Activated CD4-positive, alpha-beta memory T cell treated with anti-CD3 and anti-CD28 coated beads for 36 hours (primary cell): ENCODE measurements at regions of chr1 and their contacts with region 1.

Region 1: DNA sequence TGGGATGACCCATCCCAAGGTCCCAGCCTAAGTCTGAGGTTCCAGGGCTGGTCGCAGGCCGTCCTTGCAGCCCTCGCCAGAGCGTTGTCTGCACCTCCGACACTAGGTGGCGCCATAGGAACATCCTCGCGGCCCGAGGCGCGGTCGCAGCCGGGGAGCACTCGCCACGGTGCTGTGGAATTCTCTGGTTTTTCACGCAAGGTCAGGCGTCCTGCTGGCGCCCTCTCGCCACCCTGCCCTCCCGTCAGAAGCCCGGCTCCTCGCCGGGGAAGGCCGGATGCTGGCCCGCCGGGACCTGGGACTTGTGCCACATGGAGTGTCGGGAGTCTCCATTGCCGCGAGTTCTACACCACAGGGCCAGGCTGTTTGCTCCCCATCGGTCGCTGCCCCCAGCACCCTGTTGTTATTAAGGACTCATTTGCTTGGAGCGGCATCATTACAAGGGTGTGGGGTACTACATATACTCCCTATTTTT is 196.8 kb upstream of the LMO4 start:
- DNase-seq: peak; percentile 79
- H3K4me3 Mint-ChIP-seq: peak overlapping the region; percentile 70
- H3K27ac Mint-ChIP-seq: no peak overlapping the region
- H3K4me1 Mint-ChIP-seq: peaks cover 10% of the 10 kb centered on the region
- H3K27me3 Mint-ChIP-seq: peaks cover 32% of the 10 kb centered on the region

Region 2: DNA sequence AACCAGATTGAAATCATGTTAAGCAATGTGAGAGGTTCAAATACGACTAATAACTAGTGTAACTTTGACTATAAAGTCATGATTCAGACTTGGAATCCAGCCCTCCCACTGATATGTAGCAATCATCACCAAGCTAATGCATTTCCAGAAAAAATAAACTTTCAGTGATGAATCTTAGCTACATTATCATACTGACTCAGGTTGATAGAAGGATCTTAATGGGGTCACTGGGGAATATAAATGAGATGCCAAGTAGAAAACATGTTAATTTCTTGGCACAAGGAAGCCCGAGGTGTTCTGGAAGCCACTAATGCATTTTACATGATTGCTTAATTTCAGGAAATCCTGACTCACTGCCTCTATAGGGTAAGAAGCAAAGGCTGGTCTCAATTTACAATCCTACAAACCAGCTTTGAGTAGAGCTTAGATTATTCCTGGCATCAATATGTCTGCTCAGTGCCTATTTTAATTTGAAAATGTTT is 285.6 kb before region 1 on chr1:
- CTCF ChIA-PET with region 1: no interaction called
- POLR2A ChIA-PET with region 1: no interaction called
- intact Hi-C with region 1: no loop called
- DNase-seq: no peak
- H3K4me3 Mint-ChIP-seq: no peak overlapping the region
- H3K27ac Mint-ChIP-seq: no peak overlapping the region
- H3K4me1 Mint-ChIP-seq: no peaks in the 10 kb centered on the region
- H3K27me3 Mint-ChIP-seq: no peaks in the 10 kb centered on the region

Region 3: DNA sequence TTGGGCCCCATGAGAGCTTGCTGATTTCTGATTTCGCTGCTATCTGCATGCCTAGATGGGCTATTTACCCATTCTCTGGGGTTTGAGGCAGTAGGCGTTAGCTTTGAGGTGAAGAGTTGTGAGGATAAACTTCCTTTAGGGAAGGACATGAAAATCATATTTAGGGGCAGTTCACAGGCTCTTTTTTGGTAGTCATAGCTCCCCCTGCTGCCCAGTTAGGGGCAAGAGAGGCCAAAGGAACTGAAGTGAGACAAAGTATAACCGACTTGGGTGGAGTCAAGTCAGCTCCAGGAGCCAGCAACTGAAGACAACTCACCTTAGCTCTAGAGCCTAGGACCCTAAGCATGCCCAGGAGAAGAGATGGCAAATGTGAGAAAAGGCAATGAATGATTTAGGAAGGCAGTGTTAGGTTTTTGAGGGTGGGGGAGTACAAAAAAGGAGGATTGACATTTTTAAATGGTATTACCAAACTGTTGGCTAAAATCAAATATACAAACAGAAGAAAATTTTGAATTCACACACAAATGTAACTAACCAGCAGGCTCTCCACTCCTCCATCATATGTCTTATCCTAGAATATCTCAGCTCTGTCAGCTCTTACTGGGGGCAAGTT is 822.0 kb after region 1 on chr1:
- CTCF ChIA-PET with region 1: interaction called, 3 read pairs
- POLR2A ChIA-PET with region 1: no interaction called
- intact Hi-C with region 1: loop called (anchors 2 kb)
- DNase-seq: peak; percentile 62
- H3K4me3 Mint-ChIP-seq: no peak overlapping the region
- H3K27ac Mint-ChIP-seq: no peak overlapping the region
- H3K4me1 Mint-ChIP-seq: no peaks in the 10 kb centered on the region
- H3K27me3 Mint-ChIP-seq: peaks cover 19% of the 10 kb centered on the region